WTC11 (cell line): ENCODE measurements at regions of chr6 and their contacts with region 1.

Region 1: GRCh38 chr6:170516783-170517616 is 36.1 kb downstream of the PSMB1 start:
- DNase-seq: peak; percentile 44
- ATAC-seq: peak; percentile 95
- H3K4me3 Mint-ChIP-seq: no peak overlapping the region
- H3K27ac Mint-ChIP-seq: no peak overlapping the region
- H3K4me1 Mint-ChIP-seq: no peaks in the 10 kb centered on the region
- H3K27me3 Mint-ChIP-seq: no peaks in the 10 kb centered on the region
- CTCF ChIP-seq: peak; percentile 46; the same call in 1 of the 2 replicates

Region 2: DNA sequence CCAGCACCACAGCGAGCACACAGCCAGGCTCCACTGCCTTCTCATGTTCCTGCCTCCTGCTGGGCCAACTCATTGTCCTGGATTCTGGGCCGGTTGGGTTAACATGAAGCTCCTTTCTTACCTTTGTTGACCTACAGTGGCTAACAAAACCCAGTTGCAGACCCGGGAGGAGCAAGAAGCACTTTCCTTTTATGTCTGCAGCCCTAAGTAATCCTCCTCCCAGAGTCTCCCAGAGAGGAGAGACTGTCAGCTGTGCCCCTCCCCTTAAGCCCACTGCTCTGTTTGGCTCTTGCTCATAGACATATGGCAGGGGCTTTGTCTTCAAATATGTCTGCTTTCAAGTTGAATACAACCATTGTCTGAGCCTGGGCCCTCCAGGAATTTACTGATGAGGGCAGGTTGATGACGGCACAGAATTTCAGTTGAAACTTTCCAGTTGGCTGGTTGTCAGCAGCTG is 19.1 kb before region 1 on chr6:
- CTCF ChIA-PET with region 1: interaction called, 12 read pairs
- POLR2A ChIA-PET with region 1: no interaction called
- DNase-seq: peak; percentile 61
- ATAC-seq: peak; percentile 97
- H3K4me3 Mint-ChIP-seq: no peak overlapping the region
- H3K27ac Mint-ChIP-seq: no peak overlapping the region
- H3K4me1 Mint-ChIP-seq: peaks cover 14% of the 10 kb centered on the region
- H3K27me3 Mint-ChIP-seq: peaks cover 34% of the 10 kb centered on the region
- CTCF ChIP-seq: no peak

Region 3: GRCh38 chr6:170506446-170506845 is 10.6 kb before region 1 on chr6:
- CTCF ChIA-PET with region 1: interaction called, 11 read pairs
- POLR2A ChIA-PET with region 1: no interaction called
- DNase-seq: no peak
- ATAC-seq: no peak
- H3K4me3 Mint-ChIP-seq: no peak overlapping the region
- H3K27ac Mint-ChIP-seq: no peak overlapping the region
- H3K4me1 Mint-ChIP-seq: no peaks in the 10 kb centered on the region
- H3K27me3 Mint-ChIP-seq: peaks cover 37% of the 10 kb centered on the region
- CTCF ChIP-seq: no peak

Region 4: GRCh38 chr6:170537329-170537728 is 20.3 kb after region 1 on chr6:
- CTCF ChIA-PET with region 1: no interaction called
- POLR2A ChIA-PET with region 1: no interaction called
- DNase-seq: no peak
- ATAC-seq: no peak
- H3K4me3 Mint-ChIP-seq: no peak overlapping the region
- H3K27ac Mint-ChIP-seq: no peak overlapping the region
- H3K4me1 Mint-ChIP-seq: no peaks in the 10 kb centered on the region
- H3K27me3 Mint-ChIP-seq: no peaks in the 10 kb centered on the region
- CTCF ChIP-seq: no peak

Region 5: GRCh38 chr6:170575250-170575649 is 58.2 kb after region 1 on chr6:
- CTCF ChIA-PET with region 1: no interaction called
- POLR2A ChIA-PET with region 1: no interaction called
- DNase-seq: no peak
- ATAC-seq: peak; percentile 70
- H3K4me3 Mint-ChIP-seq: no peak overlapping the region
- H3K27ac Mint-ChIP-seq: no peak overlapping the region
- H3K4me1 Mint-ChIP-seq: no peaks in the 10 kb centered on the region
- H3K27me3 Mint-ChIP-seq: no peaks in the 10 kb centered on the region
- CTCF ChIP-seq: 0 out of 2 replicates have a peak, but pooled peaks have one; percentile 10